RWPE1 (cell line): ENCODE measurements at regions of chr4 and their contacts with region 1.

Region 1: DNA sequence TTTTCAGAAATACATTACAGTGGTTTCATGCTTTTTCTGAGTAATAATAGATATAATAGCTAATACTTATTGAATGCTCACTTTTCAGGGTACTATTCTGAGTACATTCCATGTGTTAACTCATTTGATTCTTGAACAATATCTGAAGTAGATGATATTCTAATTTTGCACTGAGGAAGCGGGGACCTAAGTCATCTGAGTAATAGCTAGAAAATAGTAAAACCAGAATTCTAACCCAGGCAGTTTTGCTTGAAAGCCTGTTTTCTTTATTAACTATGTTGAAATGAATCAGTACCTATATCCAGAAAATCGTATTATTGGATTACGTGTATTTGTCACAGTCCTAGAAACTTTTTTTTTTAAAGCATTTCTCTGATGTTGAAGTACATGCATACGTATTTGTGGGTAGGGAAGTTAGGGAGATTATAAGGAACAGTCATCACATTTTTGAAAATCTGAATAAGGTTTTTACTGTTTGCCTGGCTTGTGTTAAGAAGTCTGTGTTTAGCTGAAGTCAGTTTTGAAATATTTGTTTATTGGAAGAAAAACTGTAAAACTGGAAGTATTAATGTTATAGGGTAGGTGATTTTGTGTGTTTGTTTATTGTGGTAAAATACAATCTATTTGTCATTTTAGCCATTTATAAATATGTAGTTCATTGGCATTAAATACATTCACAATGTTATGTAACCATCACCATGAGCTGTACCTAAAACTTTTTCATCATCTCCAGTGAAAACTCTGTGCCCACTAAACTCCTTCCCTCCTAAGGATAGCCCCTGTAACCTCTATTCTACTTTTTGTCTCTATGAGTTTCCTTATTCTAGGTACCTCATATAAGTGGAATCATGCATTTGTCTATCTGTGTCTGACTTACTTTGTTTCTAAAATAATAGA is 55.3 kb downstream of the FIP1L1 start:
- DNase-seq: no peak
- H3K27ac ChIP-seq: no peak overlapping the region
- CTCF ChIP-seq: no peak

Region 2: GRCh38 chr4:53346920-53347852 is 85.6 kb before region 1 on chr4:
- CTCF ChIA-PET with region 1: no interaction called
- POLR2A ChIA-PET with region 1: no interaction called
- DNase-seq: peak; percentile 51
- H3K27ac ChIP-seq: peak overlapping the region; percentile 60
- CTCF ChIP-seq: no peak

Region 3: GRCh38 chr4:53450773-53451172 is 18.0 kb after region 1 on chr4:
- CTCF ChIA-PET with region 1: interaction called, 4 read pairs
- POLR2A ChIA-PET with region 1: interaction called, 10 read pairs
- DNase-seq: no peak
- H3K27ac ChIP-seq: no peak overlapping the region
- CTCF ChIP-seq: no peak